Gastrocnemius medialis (tissue), 4 donors: ENCODE measurements at regions of chr3 and their contacts with region 1.

Region 1: GRCh38 chr3:41997702-41998550 is 36.0 kb upstream of the ULK4 start:
- DNase-seq: no peak
- ATAC-seq: peak in 1 of 2 donors; percentile 51
- H3K4me3 ChIP-seq: no peak overlapping the region
- H3K27ac ChIP-seq: peak overlapping the region in 1 of 4 donors; percentile 0
- H3K4me1 ChIP-seq: peaks cover 0 to 12% of the 10 kb centered on the region in 2 donors
- H3K27me3 ChIP-seq: no peaks in the 10 kb centered on the region
- CTCF ChIP-seq: peak in 4 of 5 experiments; percentile 29 to 49 (median 40)
- POLR2A ChIP-seq: no peak

Region 2: DNA sequence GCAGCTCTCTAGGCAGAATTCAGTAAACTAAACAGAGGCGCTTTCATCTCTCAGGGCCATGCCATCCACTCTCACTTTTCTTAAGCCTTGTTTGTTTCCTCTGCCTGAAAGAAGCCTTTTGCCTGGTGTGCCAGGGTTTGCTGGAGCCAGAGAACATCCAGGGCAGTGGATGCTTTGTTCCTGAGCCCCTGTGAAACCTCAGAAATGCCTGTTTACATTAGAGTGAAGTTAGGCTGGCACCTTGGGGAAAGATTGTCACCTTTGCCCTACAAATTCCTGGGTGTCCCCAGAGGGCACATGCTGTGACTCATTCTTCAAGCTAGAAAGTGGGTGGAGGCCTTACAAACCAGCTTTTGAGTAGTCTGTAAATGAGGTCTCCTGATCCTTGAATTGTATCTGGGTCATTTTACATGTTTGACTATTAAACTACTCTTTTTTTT is 82.5 kb after region 1 on chr3:
- in situ Hi-C with region 1: loop called in 1 of 4 experiments (anchors 5 kb)
- intact Hi-C with region 1: no loop called
- DNase-seq: no peak
- ATAC-seq: peak; percentile 67 to 78
- H3K4me3 ChIP-seq: no peak overlapping the region
- H3K27ac ChIP-seq: peak overlapping the region; percentile 64 to 75 (median 70)
- H3K4me1 ChIP-seq: peaks cover 58 to 62% of the 10 kb centered on the region in 2 donors
- H3K27me3 ChIP-seq: no peaks in the 10 kb centered on the region
- CTCF ChIP-seq: no peak
- POLR2A ChIP-seq: no peak

Region 3: GRCh38 chr3:42302924-42303634 is 305.2 kb after region 1 on chr3:
- in situ Hi-C with region 1: no loop called
- intact Hi-C with region 1: no loop called
- DNase-seq: no peak
- ATAC-seq: no peak
- H3K4me3 ChIP-seq: no peak overlapping the region
- H3K27ac ChIP-seq: no peak overlapping the region
- H3K4me1 ChIP-seq: no peaks in the 10 kb centered on the region
- H3K27me3 ChIP-seq: no peaks in the 10 kb centered on the region
- CTCF ChIP-seq: no peak
- POLR2A ChIP-seq: no peak